ENCODE measurements at regions of chr4 and their contacts with region 1.

Region 1: GRCh38 chr4:111937368-111937767 is 207.9 kb upstream of the FAM241A start:
- DNase-seq: no peak
- ATAC-seq: peak; percentile 96
- H3K4me3 ChIP-seq: no peak overlapping the region
- H3K27ac ChIP-seq: no peak overlapping the region
- H3K4me1 ChIP-seq: no peaks in the 10 kb centered on the region
- H3K27me3 ChIP-seq: no peaks in the 10 kb centered on the region; a peak in 1 of 4 replicates
- CTCF ChIP-seq: peak; percentile 43 to 65 (median 49)
- EP300 ChIP-seq: no peak
- POLR2A ChIP-seq: no peak
- RAD21 ChIP-seq: peak; percentile 60

Region 2: DNA sequence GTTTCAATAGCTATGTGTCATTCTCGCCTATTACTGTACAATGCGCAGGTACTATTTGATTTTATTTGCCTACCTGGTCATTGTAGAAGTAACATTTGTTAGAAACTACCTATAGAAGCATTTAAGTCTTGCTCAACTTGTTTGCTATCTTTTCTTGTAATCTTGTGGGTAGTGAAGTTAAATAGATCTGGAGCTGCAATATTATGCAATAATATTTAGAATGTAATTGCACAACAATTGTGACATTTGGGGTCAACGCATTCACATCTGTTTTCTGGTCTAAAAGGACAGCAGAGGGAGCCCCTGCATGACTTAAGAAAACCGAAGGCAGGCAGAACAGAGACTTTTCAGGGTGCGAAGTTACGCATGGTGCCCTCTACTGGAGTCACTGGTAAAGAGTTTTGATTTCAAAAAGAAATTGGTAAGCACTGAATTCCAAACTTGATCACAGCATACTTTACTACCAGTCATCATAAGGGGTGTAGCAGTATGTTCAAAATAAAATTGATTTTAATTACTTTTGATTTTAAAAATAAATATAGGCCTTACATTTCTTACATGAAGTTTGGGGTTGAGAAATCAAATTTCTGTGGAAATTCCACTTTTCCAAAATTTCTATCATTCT is 295.3 kb before region 1 on chr4:
- CTCF ChIA-PET with region 1: interaction called, 29 read pairs
- POLR2A ChIA-PET with region 1: no interaction called
- RAD21 ChIA-PET with region 1: interaction called, 6 read pairs
- SMC1A ChIA-PET with region 1: interaction called, 15 read pairs
- in situ Hi-C with region 1: loop called (anchors 5 kb)
- intact Hi-C with region 1: loop called (anchors 1 kb)
- DNase-seq: peak; percentile 13
- ATAC-seq: peak; percentile 98
- H3K4me3 ChIP-seq: no peak overlapping the region
- H3K27ac ChIP-seq: no peak overlapping the region
- H3K4me1 ChIP-seq: no peaks in the 10 kb centered on the region
- H3K27me3 ChIP-seq: no peaks in the 10 kb centered on the region; a peak in 1 of 4 replicates
- CTCF ChIP-seq: peak; percentile 80 to 97 (median 83)
- EP300 ChIP-seq: no peak
- POLR2A ChIP-seq: no peak
- RAD21 ChIP-seq: peak; percentile 74

Region 3: GRCh38 chr4:112060212-112060611 is 122.8 kb after region 1 on chr4:
- CTCF ChIA-PET with region 1: interaction called, 8 read pairs
- POLR2A ChIA-PET with region 1: no interaction called
- RAD21 ChIA-PET with region 1: interaction called, 5 read pairs
- SMC1A ChIA-PET with region 1: interaction called, 12 read pairs
- in situ Hi-C with region 1: no loop called
- intact Hi-C with region 1: no loop called
- DNase-seq: no peak
- ATAC-seq: peak; percentile 77
- H3K4me3 ChIP-seq: no peak overlapping the region
- H3K27ac ChIP-seq: no peak overlapping the region
- H3K4me1 ChIP-seq: no peaks in the 10 kb centered on the region
- H3K27me3 ChIP-seq: no peaks in the 10 kb centered on the region
- CTCF ChIP-seq: peak; percentile 49 to 67 (median 54); a peak in 5 of 6 replicates
- EP300 ChIP-seq: no peak
- POLR2A ChIP-seq: no peak
- RAD21 ChIP-seq: peak; percentile 66

Measured in GM12878 (cell line).